GM12878 (cell line): ENCODE measurements at regions of chr7 and their contacts with region 1.

Region 1: GRCh38 chr7:108211382-108212201 is 81.4 kb upstream of the LAMB4 start:
- DNase-seq: peak; percentile 80
- ATAC-seq: peak; percentile 91
- H3K4me3 ChIP-seq: no peak overlapping the region
- H3K27ac ChIP-seq: peak overlapping the region; percentile 76
- H3K4me1 ChIP-seq: peaks cover 9% of the 10 kb centered on the region
- H3K27me3 ChIP-seq: no peaks in the 10 kb centered on the region
- CTCF ChIP-seq: no peak
- EP300 ChIP-seq: peak in 1 of 2 experiments; percentile 42; a peak in 2 of 4 replicates
- POLR2A ChIP-seq: no peak
- RAD21 ChIP-seq: peak; percentile 8; the same call in 1 of the 2 replicates

Region 2: DNA sequence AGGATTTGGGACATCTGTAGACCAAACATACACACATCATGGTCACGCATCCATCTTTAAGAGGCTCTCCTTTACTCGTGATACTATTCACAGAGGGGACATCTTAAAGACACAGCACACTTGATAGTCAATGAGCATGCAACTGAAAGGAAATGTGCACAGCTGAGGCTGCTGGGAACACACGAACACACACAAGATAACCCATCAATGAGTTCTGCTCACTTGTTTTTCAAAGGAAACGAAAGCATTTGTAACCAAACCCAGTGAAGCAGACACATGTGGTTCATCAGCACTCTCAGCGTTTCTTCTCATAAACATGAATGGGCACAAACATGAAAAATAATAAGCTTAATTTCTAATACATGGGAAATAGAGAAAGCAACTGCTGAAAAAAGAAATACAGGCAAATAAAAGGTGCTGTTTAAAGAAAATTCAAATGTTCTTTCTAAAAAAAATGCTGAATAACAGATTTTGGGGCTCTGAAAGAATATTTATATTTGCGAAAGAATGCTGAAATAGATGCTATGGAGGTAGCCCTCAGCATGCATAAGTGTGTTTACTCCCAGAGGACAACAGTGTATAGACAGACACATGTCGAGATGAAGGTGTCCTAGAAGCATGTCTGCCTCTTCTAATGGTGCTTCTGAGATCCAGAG is 21.7 kb before region 1 on chr7:
- CTCF ChIA-PET with region 1: interaction called, 8 read pairs
- POLR2A ChIA-PET with region 1: interaction called, 4 read pairs
- RAD21 ChIA-PET with region 1: interaction called, 11 read pairs
- SMC1A ChIA-PET with region 1: interaction called, 14 read pairs
- in situ Hi-C with region 1: no loop called
- intact Hi-C with region 1: loop called (anchors 2 kb)
- DNase-seq: peak; percentile 77
- ATAC-seq: peak; percentile 99
- H3K4me3 ChIP-seq: no peak overlapping the region
- H3K27ac ChIP-seq: peak overlapping the region; percentile 46; the same call in 1 of the 2 replicates
- H3K4me1 ChIP-seq: peaks cover 9% of the 10 kb centered on the region
- H3K27me3 ChIP-seq: no peaks in the 10 kb centered on the region
- CTCF ChIP-seq: no peak
- EP300 ChIP-seq: no peak
- POLR2A ChIP-seq: no peak
- RAD21 ChIP-seq: no peak

Region 3: GRCh38 chr7:108308903-108309302 is 97.3 kb after region 1 on chr7:
- CTCF ChIA-PET with region 1: no interaction called
- POLR2A ChIA-PET with region 1: no interaction called
- RAD21 ChIA-PET with region 1: no interaction called
- SMC1A ChIA-PET with region 1: interaction called, 19 read pairs
- in situ Hi-C with region 1: no loop called
- intact Hi-C with region 1: loop called (anchors 1 kb)
- DNase-seq: no peak
- ATAC-seq: peak; percentile 70
- H3K4me3 ChIP-seq: no peak overlapping the region
- H3K27ac ChIP-seq: no peak overlapping the region
- H3K4me1 ChIP-seq: peaks cover 9% of the 10 kb centered on the region
- H3K27me3 ChIP-seq: no peaks in the 10 kb centered on the region
- CTCF ChIP-seq: no peak
- EP300 ChIP-seq: peak in 1 of 2 experiments; percentile 29; a peak in 1 of 4 replicates
- POLR2A ChIP-seq: no peak
- RAD21 ChIP-seq: no peak

Region 4: GRCh38 chr7:108328174-108328651 is 116.6 kb after region 1 on chr7:
- CTCF ChIA-PET with region 1: no interaction called
- POLR2A ChIA-PET with region 1: no interaction called
- RAD21 ChIA-PET with region 1: interaction called, 3 read pairs
- SMC1A ChIA-PET with region 1: interaction called, 10 read pairs
- in situ Hi-C with region 1: no loop called
- intact Hi-C with region 1: no loop called
- DNase-seq: peak; percentile 36
- ATAC-seq: peak; percentile 82
- H3K4me3 ChIP-seq: no peak overlapping the region
- H3K27ac ChIP-seq: no peak overlapping the region
- H3K4me1 ChIP-seq: peaks cover 19% of the 10 kb centered on the region
- H3K27me3 ChIP-seq: no peaks in the 10 kb centered on the region
- CTCF ChIP-seq: no peak
- EP300 ChIP-seq: peak in 1 of 2 experiments; percentile 74; a peak in 1 of 4 replicates
- POLR2A ChIP-seq: no peak
- RAD21 ChIP-seq: no peak

Region 5: DNA sequence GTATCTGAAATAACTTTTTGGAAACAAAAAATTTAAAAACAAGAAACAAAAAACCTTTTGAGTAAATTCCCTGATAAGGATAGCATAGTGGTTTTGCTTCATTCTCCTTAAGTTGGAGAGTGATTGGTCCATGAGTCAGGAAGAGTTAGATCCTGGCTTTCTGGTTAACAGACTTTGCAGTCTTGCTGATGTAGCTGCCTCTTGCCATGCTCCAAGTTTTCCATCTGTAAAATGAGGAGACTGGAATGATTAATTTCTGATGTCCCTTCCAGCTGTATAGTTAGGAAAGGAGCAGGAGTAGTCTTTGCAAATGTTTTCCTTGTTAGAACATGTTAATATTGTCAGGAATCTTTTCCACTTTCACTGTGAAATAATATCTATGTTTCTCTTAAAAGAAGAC is 624.7 kb after region 1 on chr7:
- CTCF ChIA-PET with region 1: no interaction called
- POLR2A ChIA-PET with region 1: no interaction called
- RAD21 ChIA-PET with region 1: no interaction called
- SMC1A ChIA-PET with region 1: no interaction called
- in situ Hi-C with region 1: no loop called
- intact Hi-C with region 1: no loop called
- DNase-seq: no peak
- ATAC-seq: no peak
- H3K4me3 ChIP-seq: no peak overlapping the region
- H3K27ac ChIP-seq: no peak overlapping the region
- H3K4me1 ChIP-seq: no peaks in the 10 kb centered on the region
- H3K27me3 ChIP-seq: no peaks in the 10 kb centered on the region
- CTCF ChIP-seq: no peak
- EP300 ChIP-seq: no peak
- POLR2A ChIP-seq: no peak
- RAD21 ChIP-seq: no peak